Dorsolateral prefrontal cortex (tissue), 120 donors: ENCODE measurements at regions of chr14 and their contacts with region 1.

Region 1: GRCh38 chr14:32808644-32809043 is 130.0 kb upstream of the NPAS3 start:
- DNase-seq: peak in 2 of 10 donors; percentile 17 to 18
- H3K4me3 ChIP-seq: peak overlapping the region; percentile 3 to 69 (median 45)
- H3K27ac ChIP-seq: peak overlapping the region; percentile 5 to 95 (median 85)
- H3K27me3 ChIP-seq: no peaks in the 10 kb centered on the region
- CTCF ChIP-seq: peak in 1 of 56 donors; percentile 18

Region 2: GRCh38 chr14:32710731-32711680 is 97.6 kb before region 1 on chr14:
- intact Hi-C with region 1: loop called in 1 of 2 experiments (anchors 5 kb)
- DNase-seq: peak in 3 of 10 donors; percentile 25 to 62 (median 40)
- H3K4me3 ChIP-seq: peak overlapping the region in 50 of 59 donors; percentile 0 to 56 (median 28)
- H3K27ac ChIP-seq: peak overlapping the region in 58 of 59 donors; percentile 5 to 91 (median 80)
- H3K27me3 ChIP-seq: no peaks in the 10 kb centered on the region
- CTCF ChIP-seq: peak; percentile 54 to 88 (median 72)

Region 3: DNA sequence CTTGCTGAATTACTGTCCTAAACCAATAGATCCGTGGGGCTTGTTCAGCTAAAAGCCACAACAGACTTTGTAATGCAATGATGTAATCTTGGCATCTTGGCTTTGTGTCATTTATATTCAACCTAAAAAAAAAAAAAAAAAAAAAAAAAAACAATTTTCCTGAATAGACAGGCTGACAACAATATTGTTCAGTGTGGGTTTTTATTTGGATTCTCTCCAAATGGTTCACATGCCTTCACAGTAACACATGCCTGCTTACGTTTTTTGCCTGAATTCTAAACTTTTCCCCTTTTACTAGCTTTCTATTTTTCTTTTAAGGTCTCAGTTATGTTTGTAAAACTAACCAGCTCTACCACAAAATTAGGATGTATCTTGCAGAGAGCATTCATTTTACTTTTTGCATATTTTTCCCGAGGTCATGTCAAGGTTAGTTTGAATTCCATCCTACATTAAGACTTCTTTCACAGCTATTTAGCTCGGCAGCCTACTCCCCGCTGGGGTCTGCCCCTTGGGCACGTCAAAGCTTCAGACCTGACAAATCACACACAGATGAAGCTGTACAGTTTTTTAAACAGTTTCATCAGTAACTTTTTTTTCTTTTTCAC is 83.7 kb before region 1 on chr14:
- intact Hi-C with region 1: loop called in 1 of 2 experiments (anchors 5 kb)
- DNase-seq: peak in 2 of 10 donors; percentile 33 to 36
- H3K4me3 ChIP-seq: peak overlapping the region in 49 of 59 donors; percentile 4 to 57 (median 34)
- H3K27ac ChIP-seq: peak overlapping the region in 56 of 59 donors; percentile 3 to 95 (median 74)
- H3K27me3 ChIP-seq: no peaks in the 10 kb centered on the region
- CTCF ChIP-seq: peak in 1 of 56 donors; percentile 12

Region 4: DNA sequence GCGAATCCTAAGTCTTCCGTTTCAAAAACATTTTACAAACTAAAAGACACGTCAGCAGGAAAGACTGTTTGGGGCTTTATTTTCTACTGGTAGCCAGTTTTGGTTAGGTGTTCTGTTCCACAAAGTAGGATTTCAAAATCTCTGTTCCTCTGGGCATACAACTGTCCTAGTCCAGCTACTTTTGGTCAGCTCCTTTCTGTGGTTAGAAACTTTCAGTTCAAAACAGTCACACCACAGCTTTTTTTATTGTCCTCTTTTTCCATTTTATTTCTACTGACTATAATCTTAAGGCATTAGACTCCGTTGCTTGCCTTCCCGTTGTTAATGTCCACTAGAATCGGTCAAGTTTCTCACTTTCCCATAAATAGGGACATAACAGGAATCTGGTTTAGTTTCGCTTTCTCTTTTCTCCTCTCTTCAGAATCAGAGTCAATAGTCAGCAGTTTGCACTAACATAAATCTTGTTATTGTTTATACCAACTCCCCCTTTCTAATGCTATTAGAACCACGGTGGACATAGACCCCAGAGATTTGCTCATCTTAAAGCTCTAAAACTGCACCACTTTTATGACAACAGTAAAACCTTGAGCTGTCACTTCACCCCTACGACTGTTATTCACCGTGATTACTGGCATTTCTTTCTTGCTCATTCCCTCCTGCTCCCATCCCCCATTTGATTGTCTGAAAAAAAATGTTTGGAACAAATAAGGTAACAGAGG is 88.5 kb after region 1 on chr14:
- intact Hi-C with region 1: no loop called
- DNase-seq: no peak
- H3K4me3 ChIP-seq: peak overlapping the region; percentile 30 to 75 (median 58)
- H3K27ac ChIP-seq: peak overlapping the region; percentile 23 to 88 (median 78)
- H3K27me3 ChIP-seq: no peaks in the 10 kb centered on the region
- CTCF ChIP-seq: peak in 1 of 56 donors; percentile 15

Region 5: GRCh38 chr14:33350366-33350990 is 541.8 kb after region 1 on chr14:
- intact Hi-C with region 1: no loop called
- DNase-seq: no peak
- H3K4me3 ChIP-seq: no peak overlapping the region
- H3K27ac ChIP-seq: no peak overlapping the region
- H3K27me3 ChIP-seq: no peaks in the 10 kb centered on the region
- CTCF ChIP-seq: no peak